ENCODE measurements at regions of chr3 and their contacts with region 1.

Region 1: GRCh38 chr3:113495035-113495434 is 19.9 kb downstream of the SPICE1 start:
- DNase-seq: peak; percentile 44
- ATAC-seq: no peak
- H3K4me3 ChIP-seq: no peak overlapping the region
- H3K27ac ChIP-seq: no peak overlapping the region
- H3K4me1 ChIP-seq: peaks cover 7% of the 10 kb centered on the region
- H3K27me3 ChIP-seq: no peaks in the 10 kb centered on the region
- CTCF ChIP-seq: peak; percentile 44
- POLR2A ChIP-seq: no peak
- RAD21 ChIP-seq: peak; percentile 31; the same call in 1 of the 2 replicates

Region 2: DNA sequence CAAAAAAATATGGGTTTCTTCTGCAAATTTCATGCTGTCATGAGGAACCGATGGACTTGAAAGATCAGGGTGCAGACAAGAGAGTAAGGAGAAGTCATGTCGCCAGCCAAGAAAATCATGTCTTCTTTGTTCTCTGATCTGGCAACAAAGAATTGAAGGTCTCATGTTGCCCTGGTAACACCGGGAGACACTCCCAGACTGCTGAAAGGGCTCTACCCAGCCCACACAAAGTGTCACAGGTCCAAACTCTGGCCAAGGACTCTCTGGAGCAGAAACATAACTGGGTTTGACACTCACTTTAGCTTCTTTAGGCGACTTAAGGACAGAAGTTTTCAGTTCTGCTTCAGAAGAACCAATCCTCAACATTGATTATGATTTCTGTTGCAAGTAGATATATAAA is 80.2 kb after region 1 on chr3:
- CTCF ChIA-PET with region 1: interaction called, 4 read pairs
- POLR2A ChIA-PET with region 1: no interaction called
- dilution Hi-C with region 1: no loop called
- in situ Hi-C with region 1: no loop called
- intact Hi-C with region 1: loop called (anchors 1 kb)
- DNase-seq: no peak
- ATAC-seq: no peak
- H3K4me3 ChIP-seq: no peak overlapping the region
- H3K27ac ChIP-seq: no peak overlapping the region
- H3K4me1 ChIP-seq: no peaks in the 10 kb centered on the region
- H3K27me3 ChIP-seq: peaks cover 28% of the 10 kb centered on the region
- CTCF ChIP-seq: no peak
- POLR2A ChIP-seq: no peak
- RAD21 ChIP-seq: no peak

Region 3: GRCh38 chr3:113626503-113627371 is 131.7 kb after region 1 on chr3:
- CTCF ChIA-PET with region 1: interaction called, 8 read pairs
- POLR2A ChIA-PET with region 1: no interaction called
- dilution Hi-C with region 1: no loop called
- in situ Hi-C with region 1: loop called (anchors 5 kb)
- intact Hi-C with region 1: loop called (anchors 1 kb)
- DNase-seq: peak; percentile 58
- ATAC-seq: peak; percentile 93
- H3K4me3 ChIP-seq: no peak overlapping the region
- H3K27ac ChIP-seq: no peak overlapping the region
- H3K4me1 ChIP-seq: peaks cover 2% of the 10 kb centered on the region; the same call in 1 of the 2 replicates
- H3K27me3 ChIP-seq: peaks cover 13% of the 10 kb centered on the region
- CTCF ChIP-seq: peak; percentile 83
- POLR2A ChIP-seq: no peak
- RAD21 ChIP-seq: peak; percentile 82

Measured in IMR-90 (cell line).